ENCODE measurements at regions of chr22 and their contacts with region 1.

Region 1: GRCh38 chr22:40044102-40044869 is 49.5 kb downstream of the FAM83F start:
- DNase-seq: peak; percentile 94
- ATAC-seq: peak; percentile 85
- H3K4me3 Mint-ChIP-seq: peak overlapping the region; percentile 90
- H3K27ac Mint-ChIP-seq: peak overlapping the region; percentile 99
- H3K4me1 Mint-ChIP-seq: peaks cover 48% of the 10 kb centered on the region
- H3K27me3 Mint-ChIP-seq: peaks cover 12% of the 10 kb centered on the region
- CTCF ChIP-seq: no peak

Region 2: DNA sequence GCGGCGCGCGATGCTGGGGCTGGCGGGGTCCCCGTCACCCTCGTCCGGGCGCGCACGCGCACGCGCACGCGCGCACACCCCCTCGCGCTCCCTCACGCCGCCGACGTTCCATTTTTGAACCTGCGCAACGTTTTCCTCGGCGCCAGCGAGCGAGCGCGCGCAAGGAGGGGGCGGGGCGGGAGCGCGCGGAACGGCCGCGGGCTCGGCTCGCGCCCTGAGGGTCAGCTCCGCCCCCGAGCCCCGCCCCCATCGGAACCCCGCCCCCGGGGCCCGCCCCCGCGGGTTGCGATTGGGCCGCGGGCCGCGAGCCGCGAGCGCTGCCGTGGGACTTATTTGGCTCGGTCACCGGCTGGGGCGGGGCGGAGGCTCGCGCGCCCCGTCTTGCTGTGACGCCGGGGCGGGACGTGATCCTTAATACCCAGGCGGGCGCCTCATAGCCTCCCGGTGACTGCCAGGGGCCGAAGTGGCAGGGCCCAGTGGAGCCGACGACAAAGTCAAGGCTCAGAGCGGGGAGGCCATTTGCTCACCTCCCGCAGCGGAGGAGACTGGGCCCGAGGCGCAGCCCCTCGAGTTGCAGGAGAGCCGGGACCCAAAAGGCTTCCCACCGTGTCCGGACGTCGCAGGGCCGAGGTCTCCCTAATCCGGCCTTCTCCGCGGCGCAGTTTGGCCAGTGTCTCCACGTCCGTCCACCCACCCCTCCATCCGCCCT is 891.6 kb before region 1 on chr22 and contains the start of gene CBX7:
- CTCF ChIA-PET with region 1: no interaction called
- POLR2A ChIA-PET with region 1: interaction called, 9 read pairs
- intact Hi-C with region 1: loop called (anchors 1 kb)
- DNase-seq: peak; percentile 94
- ATAC-seq: peak; percentile 84
- H3K4me3 Mint-ChIP-seq: peak within 1 kb of the TSS; percentile 84
- H3K27ac Mint-ChIP-seq: peak within 1 kb of the TSS; percentile 76
- H3K4me1 Mint-ChIP-seq: peaks cover 46% of the 10 kb centered on the region
- H3K27me3 Mint-ChIP-seq: peaks cover 16% of the 10 kb centered on the region
- CTCF ChIP-seq: no peak
- total RNA-seq, gene CBX7: 42.6 and 45.4 TPM in 2 replicates

Region 3: DNA sequence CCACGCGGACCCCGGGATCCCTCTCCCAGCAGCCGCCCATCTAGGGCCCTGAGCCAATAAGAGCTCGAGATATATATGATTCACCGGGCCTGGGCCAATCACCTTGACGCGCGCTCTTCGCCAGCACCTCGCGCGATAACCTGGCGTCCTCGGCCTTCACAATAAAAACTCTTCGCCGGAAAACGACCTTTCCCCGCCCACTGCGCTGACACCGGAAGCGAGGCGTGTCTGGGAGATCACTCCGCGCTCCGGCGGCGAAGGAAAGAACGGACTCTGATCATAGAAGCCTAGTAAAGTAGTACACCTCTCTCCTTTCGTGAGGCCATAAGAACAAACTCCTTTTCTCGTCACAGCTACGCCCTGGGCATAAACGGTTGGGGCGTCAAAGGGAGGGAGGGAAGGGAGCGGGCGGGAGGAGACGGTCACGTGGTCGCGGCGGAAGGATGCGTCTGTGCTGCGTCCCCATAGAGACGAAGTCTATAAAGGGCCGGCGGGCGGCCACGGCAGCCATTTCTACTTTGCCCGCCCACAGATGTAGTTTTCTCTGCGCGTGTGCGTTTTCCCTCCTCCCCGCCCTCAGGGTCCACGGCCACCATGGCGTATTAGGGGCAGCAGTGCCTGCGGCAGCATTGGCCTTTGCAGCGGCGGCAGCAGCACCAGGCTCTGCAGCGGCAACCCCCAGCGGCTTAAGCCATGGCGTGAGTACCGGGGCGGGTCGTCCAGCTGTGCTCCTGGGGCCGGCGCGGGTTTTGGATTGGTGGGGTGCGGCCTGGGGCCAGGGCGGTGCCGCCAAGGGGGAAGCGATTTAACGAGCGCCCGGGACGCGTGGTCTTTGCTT is 524.0 kb before region 1 on chr22 and contains the start of gene ATF4:
- CTCF ChIA-PET with region 1: interaction called, 4 read pairs
- POLR2A ChIA-PET with region 1: interaction called, 43 read pairs
- intact Hi-C with region 1: no loop called
- DNase-seq: peak; percentile 88
- ATAC-seq: peak; percentile 91
- H3K4me3 Mint-ChIP-seq: peak within 1 kb of the TSS; percentile 91
- H3K27ac Mint-ChIP-seq: peak within 1 kb of the TSS; percentile 98
- H3K4me1 Mint-ChIP-seq: peaks cover 58% of the 10 kb centered on the region
- H3K27me3 Mint-ChIP-seq: peaks cover 2% of the 10 kb centered on the region
- CTCF ChIP-seq: no peak
- total RNA-seq, gene ATF4: 363 and 368 TPM in 2 replicates

Region 4: DNA sequence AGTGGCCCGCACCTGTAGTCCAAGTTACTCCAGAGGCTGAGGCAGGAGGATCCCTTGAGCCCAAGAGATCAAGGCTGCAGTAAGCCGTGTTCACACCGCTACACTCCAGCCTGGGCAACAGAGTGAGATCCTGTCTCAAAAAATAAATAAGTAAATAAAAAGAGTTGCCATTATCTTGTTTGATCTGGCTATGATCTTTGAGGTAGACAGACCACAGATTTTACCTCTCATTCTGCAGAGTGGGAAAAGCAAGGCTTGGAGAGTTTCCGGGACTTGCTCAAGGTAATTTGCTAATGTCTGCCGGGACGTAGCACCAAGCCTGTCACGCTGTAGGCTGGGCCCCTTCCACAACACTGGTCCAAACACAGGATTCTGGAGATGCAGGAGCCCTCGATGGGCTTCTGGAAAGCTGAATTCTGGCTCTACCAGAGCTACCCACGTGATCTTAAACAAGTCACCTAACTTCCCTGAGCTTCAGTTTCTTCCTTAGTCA is 136.6 kb before region 1 on chr22:
- CTCF ChIA-PET with region 1: no interaction called
- POLR2A ChIA-PET with region 1: no interaction called
- intact Hi-C with region 1: no loop called
- DNase-seq: no peak
- ATAC-seq: no peak
- H3K4me3 Mint-ChIP-seq: no peak overlapping the region
- H3K27ac Mint-ChIP-seq: no peak overlapping the region
- H3K4me1 Mint-ChIP-seq: peaks cover 51% of the 10 kb centered on the region
- H3K27me3 Mint-ChIP-seq: no peaks in the 10 kb centered on the region
- CTCF ChIP-seq: no peak

Region 5: GRCh38 chr22:40070701-40071100 is 26.4 kb after region 1 on chr22:
- CTCF ChIA-PET with region 1: no interaction called
- POLR2A ChIA-PET with region 1: interaction called, 15 read pairs
- intact Hi-C with region 1: no loop called
- DNase-seq: no peak
- ATAC-seq: no peak
- H3K4me3 Mint-ChIP-seq: no peak overlapping the region
- H3K27ac Mint-ChIP-seq: no peak overlapping the region
- H3K4me1 Mint-ChIP-seq: peaks cover 69% of the 10 kb centered on the region
- H3K27me3 Mint-ChIP-seq: no peaks in the 10 kb centered on the region
- CTCF ChIP-seq: no peak

Region 6: GRCh38 chr22:40177738-40178416 is 133.6 kb after region 1 on chr22 and contains the start of gene TNRC6B:
- CTCF ChIA-PET with region 1: no interaction called
- POLR2A ChIA-PET with region 1: interaction called, 114 read pairs
- intact Hi-C with region 1: loop called (anchors 1 kb)
- DNase-seq: peak; percentile 24
- ATAC-seq: peak; percentile 86
- H3K4me3 Mint-ChIP-seq: peak within 1 kb of the TSS; percentile 87
- H3K27ac Mint-ChIP-seq: peak within 1 kb of the TSS; percentile 87
- H3K4me1 Mint-ChIP-seq: peaks cover 60% of the 10 kb centered on the region
- H3K27me3 Mint-ChIP-seq: no peaks in the 10 kb centered on the region
- CTCF ChIP-seq: no peak
- total RNA-seq, gene TNRC6B: 84.6 and 95.2 TPM in 2 replicates

Region 7: GRCh38 chr22:40636380-40637182 is 592.3 kb after region 1 on chr22 and contains the start of gene MRTFA:
- CTCF ChIA-PET with region 1: no interaction called
- POLR2A ChIA-PET with region 1: interaction called, 9 read pairs
- intact Hi-C with region 1: loop called (anchors 10 kb)
- DNase-seq: peak; percentile 95
- ATAC-seq: peak; percentile 93
- H3K4me3 Mint-ChIP-seq: peak within 1 kb of the TSS; percentile 98
- H3K27ac Mint-ChIP-seq: peak within 1 kb of the TSS; percentile 95
- H3K4me1 Mint-ChIP-seq: peaks cover 45% of the 10 kb centered on the region
- H3K27me3 Mint-ChIP-seq: no peaks in the 10 kb centered on the region
- CTCF ChIP-seq: no peak
- total RNA-seq, gene MRTFA: 99.4 and 115 TPM in 2 replicates